Natural killer cell (primary cell): ENCODE measurements at regions of chr1 and their contacts with region 1.

Region 1: DNA sequence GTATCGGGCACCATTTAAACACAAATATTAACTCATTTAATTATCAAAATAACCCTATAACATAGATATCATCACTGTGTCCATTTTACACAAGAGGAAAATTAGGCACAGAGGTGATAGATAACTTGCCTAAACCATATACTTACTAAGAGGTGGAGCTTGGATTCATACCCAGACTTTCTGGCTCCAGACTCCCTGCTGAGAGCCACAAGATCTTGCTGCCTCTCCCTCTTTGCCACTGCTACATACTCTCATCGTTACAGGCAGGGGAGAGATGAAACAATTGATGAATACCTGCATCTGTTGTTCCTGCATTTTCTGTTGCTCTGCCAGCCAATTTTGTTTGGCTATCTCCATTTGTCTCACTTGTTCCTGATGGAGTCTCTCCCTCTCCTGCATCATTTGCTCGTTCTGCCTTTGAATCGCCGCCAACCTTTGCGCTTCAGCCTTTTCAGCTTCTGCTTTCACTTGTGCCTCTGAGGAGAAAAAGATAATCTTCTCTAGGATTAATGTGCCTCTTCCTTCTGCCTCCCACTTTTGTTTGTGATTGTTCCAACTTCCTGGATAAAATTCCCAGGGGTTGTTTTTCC is 10.6 kb downstream of the GBP5 start:
- DNase-seq: no peak
- ATAC-seq: no peak
- H3K4me3 ChIP-seq: no peak overlapping the region
- H3K4me3 Mint-ChIP-seq: peak overlapping the region; percentile 69
- H3K27ac ChIP-seq: peak overlapping the region; percentile 34
- H3K27ac Mint-ChIP-seq: peak overlapping the region; percentile 81 to 94
- H3K4me1 ChIP-seq: peaks cover 41% of the 10 kb centered on the region
- H3K4me1 Mint-ChIP-seq: peaks cover 80 to 82% of the 10 kb centered on the region in 2 donors
- H3K27me3 ChIP-seq: no peaks in the 10 kb centered on the region
- H3K27me3 Mint-ChIP-seq: no peaks in the 10 kb centered on the region
- CTCF ChIP-seq: no peak

Region 2: GRCh38 chr1:88956003-88956402 is 306.0 kb before region 1 on chr1:
- intact Hi-C with region 1: no loop called
- DNase-seq: no peak
- ATAC-seq: no peak
- H3K4me3 ChIP-seq: no peak overlapping the region
- H3K4me3 Mint-ChIP-seq: no peak overlapping the region
- H3K27ac ChIP-seq: no peak overlapping the region
- H3K27ac Mint-ChIP-seq: no peak overlapping the region
- H3K4me1 ChIP-seq: no peaks in the 10 kb centered on the region
- H3K4me1 Mint-ChIP-seq: no peaks in the 10 kb centered on the region
- H3K27me3 ChIP-seq: no peaks in the 10 kb centered on the region
- H3K27me3 Mint-ChIP-seq: no peaks in the 10 kb centered on the region
- CTCF ChIP-seq: no peak

Region 3: DNA sequence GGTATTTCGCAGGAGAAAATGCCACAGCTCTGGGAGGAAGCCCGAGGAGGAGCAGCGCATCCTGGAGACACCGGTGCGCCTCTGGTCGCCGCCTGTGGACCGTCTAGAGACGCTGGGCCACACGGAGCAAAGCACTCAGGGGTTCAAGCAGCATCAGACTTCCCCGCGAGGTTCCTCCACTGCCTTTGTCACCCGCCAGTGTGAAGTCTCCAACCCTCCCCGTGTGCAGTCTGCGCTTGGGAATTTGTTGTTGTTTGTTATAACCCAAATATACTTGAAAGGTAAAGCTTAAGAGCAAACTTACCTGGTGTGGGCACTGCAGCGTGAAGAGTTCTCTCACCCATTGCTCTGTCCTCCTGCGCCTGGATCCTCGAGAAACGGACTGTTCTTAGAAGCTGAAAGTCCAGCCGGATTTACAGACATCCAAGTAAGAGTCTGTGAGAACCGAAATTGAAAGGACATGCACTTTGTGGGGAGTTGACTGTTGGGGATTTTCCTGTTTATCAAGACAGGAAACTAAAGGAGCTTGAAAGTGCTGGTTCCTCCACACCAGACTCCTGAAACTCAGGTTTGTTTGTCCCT is 63.4 kb before region 1 on chr1 and contains the start of gene GBP4:
- intact Hi-C with region 1: loop called (anchors 1 kb)
- DNase-seq: peak; percentile 40 to 80
- ATAC-seq: peak; percentile 70 to 80 (median 72)
- H3K4me3 ChIP-seq: peak within 1 kb of the TSS; percentile 81
- H3K4me3 Mint-ChIP-seq: peak within 1 kb of the TSS; percentile 89
- H3K27ac ChIP-seq: peak within 1 kb of the TSS; percentile 88
- H3K27ac Mint-ChIP-seq: peak within 1 kb of the TSS; percentile 91 to 99
- H3K4me1 ChIP-seq: peaks cover 23% of the 10 kb centered on the region
- H3K4me1 Mint-ChIP-seq: peaks cover 67 to 93% of the 10 kb centered on the region in 2 donors
- H3K27me3 ChIP-seq: no peaks in the 10 kb centered on the region
- H3K27me3 Mint-ChIP-seq: no peaks in the 10 kb centered on the region
- CTCF ChIP-seq: no peak
- total RNA-seq, gene GBP4: 39.1 to 62.1 (median 45.6) TPM

Region 4: GRCh38 chr1:89310505-89310904 is 48.5 kb after region 1 on chr1:
- intact Hi-C with region 1: loop called (anchors 1 kb)
- DNase-seq: peak in 1 of 2 donors; percentile 47
- ATAC-seq: peak; percentile 80 to 85 (median 84)
- H3K4me3 ChIP-seq: no peak overlapping the region
- H3K4me3 Mint-ChIP-seq: peak overlapping the region; percentile 73
- H3K27ac ChIP-seq: peak overlapping the region; percentile 79
- H3K27ac Mint-ChIP-seq: peak overlapping the region; percentile 91 to 98
- H3K4me1 ChIP-seq: peaks cover 22% of the 10 kb centered on the region
- H3K4me1 Mint-ChIP-seq: peaks cover 40 to 45% of the 10 kb centered on the region in 2 donors
- H3K27me3 ChIP-seq: no peaks in the 10 kb centered on the region
- H3K27me3 Mint-ChIP-seq: no peaks in the 10 kb centered on the region
- CTCF ChIP-seq: no peak

Region 5: GRCh38 chr1:89351597-89352311 is 89.7 kb after region 1 on chr1:
- intact Hi-C with region 1: loop called (anchors 2 kb)
- DNase-seq: no peak
- ATAC-seq: peak; percentile 61 to 87 (median 81)
- H3K4me3 ChIP-seq: no peak overlapping the region
- H3K4me3 Mint-ChIP-seq: no peak overlapping the region
- H3K27ac ChIP-seq: no peak overlapping the region
- H3K27ac Mint-ChIP-seq: peak overlapping the region in 1 of 2 donors; percentile 70
- H3K4me1 ChIP-seq: no peaks in the 10 kb centered on the region
- H3K4me1 Mint-ChIP-seq: peaks cover 0 to 14% of the 10 kb centered on the region in 2 donors
- H3K27me3 ChIP-seq: no peaks in the 10 kb centered on the region
- H3K27me3 Mint-ChIP-seq: no peaks in the 10 kb centered on the region
- CTCF ChIP-seq: no peak